Activated CD4-positive, alpha-beta memory T cell treated with anti-CD3 and anti-CD28 coated beads for 36 hours (primary cell): ENCODE measurements at regions of chr3 and their contacts with region 1.

Region 1: DNA sequence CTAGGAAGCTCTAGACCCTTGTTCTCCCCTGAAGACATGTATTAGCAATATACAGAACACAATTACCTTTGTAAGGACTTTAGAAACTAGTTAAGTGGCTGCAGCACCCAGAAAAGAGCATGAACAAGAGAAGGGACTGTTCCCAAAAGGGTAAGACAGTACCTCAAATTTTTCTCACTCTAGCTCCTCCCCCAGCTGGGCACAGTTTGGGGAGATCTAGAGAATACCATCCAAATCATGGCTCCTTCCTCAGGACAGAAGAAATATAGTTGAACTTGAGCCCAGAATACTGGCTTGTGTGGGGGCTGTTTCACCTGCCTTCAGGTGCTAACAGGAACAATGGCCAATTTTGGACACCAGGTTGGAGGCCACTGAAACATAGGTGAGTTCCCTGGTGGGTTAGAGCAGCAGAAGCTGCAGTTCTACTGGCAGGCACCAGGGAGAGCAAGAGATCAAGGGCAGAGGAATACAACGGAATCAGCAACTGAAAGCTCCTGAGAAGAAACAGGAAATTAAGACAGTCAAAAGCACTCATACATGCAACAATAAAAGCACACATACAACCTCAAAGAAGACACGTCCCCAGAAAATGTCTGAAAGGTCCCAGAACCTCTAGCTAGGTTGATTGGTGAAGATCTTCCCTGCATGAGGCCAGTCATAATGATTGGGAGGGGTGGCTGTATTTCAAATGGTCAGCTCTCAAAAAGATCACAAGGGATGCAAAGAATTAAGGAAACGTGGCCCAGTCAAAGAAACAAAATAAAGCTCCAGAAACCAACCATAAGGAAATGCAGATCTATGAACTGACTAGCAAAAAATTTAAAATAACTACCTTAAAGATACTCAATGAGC is 104.9 kb upstream of the ASB14 start:
- DNase-seq: peak; percentile 75
- H3K4me3 Mint-ChIP-seq: no peak overlapping the region
- H3K27ac Mint-ChIP-seq: no peak overlapping the region
- H3K4me1 Mint-ChIP-seq: peaks cover 6% of the 10 kb centered on the region
- H3K27me3 Mint-ChIP-seq: peaks cover 5% of the 10 kb centered on the region

Region 2: GRCh38 chr3:57169872-57170623 is 227.4 kb before region 1 on chr3:
- CTCF ChIA-PET with region 1: interaction called, 11 read pairs
- POLR2A ChIA-PET with region 1: no interaction called
- intact Hi-C with region 1: loop called (anchors 1 kb)
- DNase-seq: peak; percentile 75
- H3K4me3 Mint-ChIP-seq: peak overlapping the region; percentile 57
- H3K27ac Mint-ChIP-seq: no peak overlapping the region
- H3K4me1 Mint-ChIP-seq: peaks cover 4% of the 10 kb centered on the region
- H3K27me3 Mint-ChIP-seq: peaks cover 47% of the 10 kb centered on the region

Region 3: DNA sequence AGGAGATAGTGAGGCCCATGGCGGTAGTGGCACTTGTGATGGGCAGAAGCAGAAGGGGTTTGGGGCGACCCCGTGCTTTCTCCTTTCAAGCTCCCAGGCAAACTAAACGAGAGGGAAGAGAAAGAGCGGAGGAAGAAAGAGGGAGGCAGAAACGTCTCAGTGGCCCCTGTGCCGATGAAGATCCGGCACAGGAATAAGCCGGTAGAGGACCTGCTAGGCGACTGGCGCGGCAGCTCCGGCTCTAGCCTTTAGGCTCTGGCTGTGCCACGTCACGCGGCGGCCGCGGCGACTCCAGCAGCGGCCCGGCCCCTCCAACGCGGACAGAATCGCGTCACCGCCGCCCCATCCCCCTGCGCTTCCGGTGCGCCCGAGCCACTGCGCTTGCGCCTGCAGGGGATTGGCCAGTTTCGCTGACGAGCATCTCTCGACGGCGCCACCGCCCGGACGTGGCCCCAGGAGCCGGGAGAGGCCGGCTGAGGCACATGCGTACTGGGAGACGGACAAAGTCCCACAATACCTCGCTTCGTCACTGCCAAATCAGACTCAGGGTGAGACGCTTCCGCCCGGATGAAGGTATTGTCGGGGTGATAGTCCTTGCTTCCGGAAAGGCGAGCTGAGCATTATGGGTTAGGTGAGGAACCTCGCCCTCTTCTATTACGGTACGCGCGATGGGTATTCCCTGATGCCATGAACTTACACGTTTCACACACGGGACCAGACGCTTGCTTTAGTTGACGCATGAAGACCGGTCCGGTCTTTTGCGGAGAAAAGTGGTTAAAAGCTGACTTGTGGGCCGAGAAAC is 199.9 kb after region 1 on chr3 and contains the start of gene ARF4:
- CTCF ChIA-PET with region 1: interaction called, 7 read pairs
- POLR2A ChIA-PET with region 1: interaction called, 3 read pairs
- intact Hi-C with region 1: loop called (anchors 5 kb)
- DNase-seq: peak; percentile 100
- H3K4me3 Mint-ChIP-seq: peak within 1 kb of the TSS; percentile 97
- H3K27ac Mint-ChIP-seq: peak within 1 kb of the TSS; percentile 99
- H3K4me1 Mint-ChIP-seq: peaks cover 41% of the 10 kb centered on the region
- H3K27me3 Mint-ChIP-seq: no peaks in the 10 kb centered on the region
- total RNA-seq, gene ARF4: 66.6 to 68.8 TPM

Region 4: GRCh38 chr3:57826245-57826951 is 429.0 kb after region 1 on chr3:
- CTCF ChIA-PET with region 1: interaction called, 7 read pairs
- POLR2A ChIA-PET with region 1: no interaction called
- intact Hi-C with region 1: loop called (anchors 10 kb)
- DNase-seq: no peak
- H3K4me3 Mint-ChIP-seq: no peak overlapping the region
- H3K27ac Mint-ChIP-seq: no peak overlapping the region
- H3K4me1 Mint-ChIP-seq: peaks cover 11% of the 10 kb centered on the region
- H3K27me3 Mint-ChIP-seq: no peaks in the 10 kb centered on the region

Region 5: DNA sequence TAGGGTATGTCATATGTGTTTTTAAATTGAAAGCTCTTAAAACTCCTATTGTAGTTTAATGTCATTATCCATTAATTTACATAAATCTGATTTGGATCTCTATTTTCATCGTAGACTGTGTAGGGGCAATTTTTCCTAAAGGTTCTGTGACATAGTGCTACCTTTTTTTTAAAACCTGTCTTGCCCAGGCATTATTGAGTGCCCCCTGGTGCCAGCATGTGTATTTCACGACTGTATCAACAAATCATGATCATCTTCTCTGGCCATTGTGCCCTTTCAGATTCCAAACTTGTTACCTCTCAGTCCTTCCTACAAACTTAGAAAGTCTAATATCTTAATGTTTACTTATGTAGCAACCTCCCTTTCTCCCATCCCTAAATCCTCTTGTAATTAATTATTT is 513.6 kb after region 1 on chr3:
- CTCF ChIA-PET with region 1: interaction called, 16 read pairs
- POLR2A ChIA-PET with region 1: no interaction called
- intact Hi-C with region 1: loop called (anchors 5 kb)
- DNase-seq: peak; percentile 22
- H3K4me3 Mint-ChIP-seq: no peak overlapping the region
- H3K27ac Mint-ChIP-seq: no peak overlapping the region
- H3K4me1 Mint-ChIP-seq: no peaks in the 10 kb centered on the region
- H3K27me3 Mint-ChIP-seq: no peaks in the 10 kb centered on the region